OCI-LY7 (cell line): ENCODE measurements at regions of chr5 and their contacts with region 1.

Region 1: DNA sequence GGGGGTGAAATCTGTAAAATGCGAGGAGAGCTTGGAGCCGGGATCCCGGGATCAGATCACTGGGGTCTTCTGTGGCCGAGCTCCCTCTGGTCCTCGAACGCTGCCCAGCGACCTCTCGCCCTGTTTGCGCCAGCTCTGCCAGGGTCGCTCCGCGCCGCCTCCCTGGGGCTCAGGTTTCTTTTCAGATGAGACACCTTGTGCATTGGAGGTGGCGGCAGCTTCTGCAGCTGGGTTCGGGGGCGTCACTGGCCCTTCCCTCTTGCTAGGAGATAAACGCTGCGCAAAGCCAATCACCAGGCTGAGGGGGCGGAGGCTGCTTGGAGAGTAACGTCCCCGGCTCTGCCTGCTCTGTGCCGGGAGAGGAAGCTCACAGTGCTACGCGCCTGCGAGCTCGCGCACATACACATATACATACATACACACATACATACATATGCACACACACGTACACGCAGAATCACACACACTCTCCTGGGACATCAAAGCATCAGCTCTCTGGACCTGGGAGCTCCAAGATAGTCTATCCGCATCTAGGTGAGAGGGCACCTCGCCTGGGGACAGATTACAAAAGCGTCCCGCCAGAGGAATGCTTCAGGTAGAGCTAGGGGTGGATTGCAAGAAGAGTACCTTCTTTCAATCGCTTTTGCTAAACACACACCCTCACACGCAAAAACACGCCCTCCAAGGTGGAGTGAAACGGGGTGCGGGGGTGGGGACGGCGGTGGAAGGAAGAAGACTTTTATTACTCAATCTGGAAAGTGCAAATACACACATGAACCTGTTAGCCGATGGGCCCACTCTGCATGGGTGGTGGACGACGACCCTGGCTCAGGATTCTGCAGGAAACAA is at the start of gene ST8SIA4:
- DNase-seq: peak; percentile 94
- H3K4me3 ChIP-seq: peak within 1 kb of the TSS; percentile 87
- H3K27ac ChIP-seq: peak within 1 kb of the TSS; percentile 94
- H3K4me1 ChIP-seq: peaks cover 33% of the 10 kb centered on the region
- CTCF ChIP-seq: no peak
- total RNA-seq, gene ST8SIA4: 10.2 and 14.9 TPM in 2 replicates

Region 2: DNA sequence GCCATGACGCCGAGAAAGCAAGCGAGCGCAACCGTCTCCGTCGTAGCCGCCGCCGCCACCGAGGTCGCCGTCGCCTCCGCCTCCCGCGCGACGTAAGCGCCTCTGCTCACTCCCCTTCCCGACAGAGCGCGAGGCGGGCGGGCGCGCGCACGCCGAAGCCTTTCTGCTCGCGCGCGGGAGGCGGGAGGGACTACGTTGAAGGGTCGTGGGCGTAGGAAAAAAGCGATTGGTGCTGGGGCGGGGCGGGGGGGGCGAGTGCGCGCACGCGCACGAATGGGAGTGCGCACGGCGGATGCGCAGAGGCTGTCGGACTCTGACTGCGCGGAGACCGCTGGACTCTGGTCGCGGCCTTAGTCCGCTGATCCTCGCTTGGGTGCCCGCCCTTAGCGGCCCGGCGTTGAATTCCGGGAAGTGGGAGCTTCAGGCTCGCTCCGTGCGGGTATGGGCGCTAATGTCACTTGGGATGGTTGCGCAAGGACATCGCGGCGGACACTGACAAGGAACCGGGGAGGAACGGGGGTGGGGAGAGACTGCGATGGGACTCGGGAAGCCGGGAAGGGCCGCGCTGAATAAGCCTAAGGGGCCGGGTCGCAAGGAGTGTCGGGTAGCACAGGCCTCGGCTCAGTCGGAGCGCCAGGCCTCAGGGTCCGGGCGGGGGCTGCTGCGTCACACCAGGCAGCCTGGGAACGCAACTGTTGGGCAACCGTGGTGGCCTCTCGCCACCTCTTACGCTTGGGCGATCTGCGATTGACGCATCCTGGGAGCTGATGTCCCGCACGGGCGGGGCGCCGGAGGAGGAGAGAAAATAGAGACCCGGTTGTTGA is 1974.2 kb before region 1 on chr5 and contains the start of gene CHD1:
- CTCF ChIA-PET with region 1: no interaction called
- POLR2A ChIA-PET with region 1: no interaction called
- intact Hi-C with region 1: loop called (anchors 10 kb)
- DNase-seq: peak; percentile 94
- H3K4me3 ChIP-seq: peak within 1 kb of the TSS; percentile 76
- H3K27ac ChIP-seq: no peak within 1 kb of the TSS
- H3K4me1 ChIP-seq: peaks cover 4% of the 10 kb centered on the region
- CTCF ChIP-seq: no peak
- total RNA-seq, gene CHD1: 10.3 and 23.3 TPM in 2 replicates

Region 3: GRCh38 chr5:100623719-100624118 is 279.5 kb before region 1 on chr5:
- CTCF ChIA-PET with region 1: no interaction called
- POLR2A ChIA-PET with region 1: no interaction called
- intact Hi-C with region 1: loop called (anchors 2 kb)
- DNase-seq: peak; percentile 46
- H3K4me3 ChIP-seq: no peak overlapping the region
- H3K27ac ChIP-seq: no peak overlapping the region
- H3K4me1 ChIP-seq: no peaks in the 10 kb centered on the region
- CTCF ChIP-seq: peak; percentile 80

Region 4: DNA sequence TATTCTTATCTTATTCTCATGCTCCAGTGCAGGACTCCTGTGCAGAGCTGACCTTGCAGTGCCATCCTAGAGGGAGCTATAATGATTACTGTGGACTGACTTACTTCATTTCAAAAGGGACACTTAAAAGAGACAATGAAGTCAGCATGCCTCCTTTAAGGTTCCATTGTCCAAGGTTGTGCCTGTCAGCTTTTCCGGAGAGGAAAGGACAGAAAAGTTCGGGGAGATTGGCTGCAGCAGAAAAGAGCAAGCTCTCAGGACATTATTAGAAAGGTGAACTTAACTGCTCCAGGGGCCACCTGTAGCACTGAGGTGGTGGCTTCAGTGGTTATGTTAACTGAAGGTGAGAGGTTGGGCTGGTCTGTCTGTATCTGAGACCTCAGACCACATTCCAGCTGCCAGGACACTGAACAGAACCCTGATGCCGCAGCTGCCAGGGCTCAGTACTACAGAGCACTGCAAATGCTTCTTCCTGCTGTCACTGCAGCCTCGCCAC is 113.0 kb before region 1 on chr5:
- CTCF ChIA-PET with region 1: interaction called, 8 read pairs
- POLR2A ChIA-PET with region 1: interaction called, 128 read pairs
- intact Hi-C with region 1: no loop called
- DNase-seq: peak; percentile 74
- H3K4me3 ChIP-seq: peak overlapping the region; percentile 35
- H3K27ac ChIP-seq: peak overlapping the region; percentile 58
- H3K4me1 ChIP-seq: peaks cover 49% of the 10 kb centered on the region
- CTCF ChIP-seq: peak; percentile 80

Region 5: GRCh38 chr5:100840384-100840783 is 62.9 kb before region 1 on chr5:
- CTCF ChIA-PET with region 1: interaction called, 3 read pairs
- POLR2A ChIA-PET with region 1: interaction called, 44 read pairs
- intact Hi-C with region 1: no loop called
- DNase-seq: peak; percentile 40
- H3K4me3 ChIP-seq: peak overlapping the region; percentile 53
- H3K27ac ChIP-seq: peak overlapping the region; percentile 45
- H3K4me1 ChIP-seq: peaks cover 34% of the 10 kb centered on the region
- CTCF ChIP-seq: no peak

Region 6: GRCh38 chr5:100860407-100860806 is 42.9 kb before region 1 on chr5:
- CTCF ChIA-PET with region 1: interaction called, 4 read pairs
- POLR2A ChIA-PET with region 1: interaction called, 140 read pairs
- intact Hi-C with region 1: no loop called
- DNase-seq: no peak
- H3K4me3 ChIP-seq: no peak overlapping the region
- H3K27ac ChIP-seq: no peak overlapping the region
- H3K4me1 ChIP-seq: peaks cover 38% of the 10 kb centered on the region
- CTCF ChIP-seq: no peak

Region 7: GRCh38 chr5:101009758-101010519 is 106.7 kb after region 1 on chr5:
- CTCF ChIA-PET with region 1: interaction called, 3 read pairs
- POLR2A ChIA-PET with region 1: interaction called, 12 read pairs
- intact Hi-C with region 1: loop called (anchors 5 kb)
- DNase-seq: peak; percentile 73
- H3K4me3 ChIP-seq: peak overlapping the region; percentile 22
- H3K27ac ChIP-seq: no peak overlapping the region
- H3K4me1 ChIP-seq: peaks cover 13% of the 10 kb centered on the region
- CTCF ChIP-seq: no peak

Region 8: DNA sequence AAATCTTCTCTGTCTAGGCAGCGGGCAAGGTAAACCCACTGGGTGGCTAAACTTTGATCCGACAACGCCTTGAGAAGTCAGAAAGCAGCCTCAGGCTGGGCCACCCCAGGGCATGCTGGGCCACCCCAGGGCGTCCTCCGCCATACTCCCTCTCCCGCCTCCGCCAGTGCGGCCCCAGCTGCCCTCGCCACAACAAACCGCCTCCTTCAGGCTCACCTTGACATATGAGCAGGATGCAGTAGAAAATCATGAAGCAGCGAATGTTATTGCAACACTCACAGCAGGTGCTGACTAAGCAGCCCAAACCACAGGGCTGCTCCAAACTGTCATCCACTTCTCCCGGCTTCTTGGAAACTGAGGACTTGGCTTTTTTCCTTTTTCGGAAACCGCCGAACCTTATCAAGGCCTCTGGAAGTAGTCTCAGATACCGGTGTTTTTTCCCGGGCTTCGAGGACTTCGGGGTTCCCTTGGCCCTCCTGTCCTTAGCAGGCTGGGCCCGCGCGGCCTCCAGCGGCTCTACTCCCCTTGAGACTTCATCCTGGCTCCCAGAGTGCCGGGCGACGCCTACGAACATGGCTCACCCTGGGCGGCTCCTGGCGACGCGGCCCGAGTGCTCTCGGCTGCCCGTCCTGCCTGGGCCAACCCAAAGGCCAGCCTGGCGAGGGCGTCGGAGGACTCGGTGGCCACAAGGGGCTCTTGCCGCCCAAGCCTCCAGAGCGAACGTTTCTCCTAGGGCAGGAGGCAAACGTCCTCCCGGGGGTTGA is 1595.2 kb after region 1 on chr5 and contains the start of gene SLCO6A1:
- CTCF ChIA-PET with region 1: no interaction called
- POLR2A ChIA-PET with region 1: no interaction called
- intact Hi-C with region 1: no loop called
- DNase-seq: no peak
- H3K4me3 ChIP-seq: no peak within 1 kb of the TSS
- H3K27ac ChIP-seq: no peak within 1 kb of the TSS
- H3K4me1 ChIP-seq: no peaks in the 10 kb centered on the region
- CTCF ChIP-seq: no peak
- total RNA-seq, gene SLCO6A1: not detected in 2 replicates